H1 (cell line): ENCODE measurements at regions of chr12 and their contacts with region 1.

Region 1: DNA sequence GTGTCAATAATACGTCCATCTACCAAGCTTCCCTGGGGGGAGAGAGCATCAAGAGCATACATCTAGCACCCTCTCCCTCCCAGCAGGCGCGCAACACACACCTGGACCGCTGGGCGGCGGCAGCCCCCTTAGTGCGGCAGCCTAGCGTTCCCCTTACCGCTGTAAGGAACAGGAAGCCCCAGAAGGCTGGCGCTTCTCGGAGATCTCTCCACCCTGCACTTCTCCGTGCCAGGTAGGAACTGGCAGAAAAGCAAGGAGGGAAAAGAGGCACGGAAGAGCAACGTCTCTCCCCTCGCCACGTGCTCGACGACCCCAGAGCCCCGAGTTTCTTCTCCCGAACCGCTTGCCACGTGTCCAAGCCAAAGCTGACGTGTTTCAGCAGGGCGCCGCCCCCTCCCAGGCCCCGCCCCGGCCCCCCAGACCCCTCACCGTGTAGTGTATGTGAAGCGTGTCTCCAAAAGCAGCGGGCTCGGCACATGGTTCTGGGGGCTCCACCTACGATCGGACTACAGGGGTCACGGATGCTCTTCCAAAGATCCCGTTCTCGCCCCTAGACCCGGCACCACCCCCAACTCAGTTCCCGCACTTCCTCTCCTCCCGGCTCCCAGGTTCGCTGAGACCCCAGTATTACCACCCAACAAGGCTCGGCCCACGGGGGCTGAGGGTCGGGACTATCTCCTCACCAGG is 532 bp downstream of the FKBP11 start:
- DNase-seq: peak; percentile 29 to 79
- H3K4me3 ChIP-seq: peak overlapping the region; percentile 61 to 86 (median 70)
- H3K27ac ChIP-seq: peak overlapping the region; percentile 55
- H3K4me1 ChIP-seq: peaks cover 0 to 14% (median 4%) of the 10 kb centered on the region in 4 experiments; a peak in 4 of 7 replicates
- H3K27me3 ChIP-seq: no peaks in the 10 kb centered on the region; a peak in 1 of 7 replicates
- CTCF ChIP-seq: peak; percentile 64 to 71 (median 69)
- EP300 ChIP-seq: no peak
- POLR2A ChIP-seq: peak; percentile 27 to 44; a peak in 2 of 3 replicates
- RAD21 ChIP-seq: peak; percentile 46 to 61

Region 2: GRCh38 chr12:48903982-48904411 is 20.8 kb before region 1 on chr12:
- CTCF ChIA-PET with region 1: interaction called, 45 read pairs
- POLR2A ChIA-PET with region 1: interaction called, 21 read pairs
- DNase-seq: peak in 1 of 2 experiments; percentile 95
- H3K4me3 ChIP-seq: peak overlapping the region; percentile 13 to 59 (median 53); a peak in 7 of 8 replicates
- H3K27ac ChIP-seq: no peak overlapping the region
- H3K4me1 ChIP-seq: 0 out of 7 replicates have a peak, but pooled peaks cover 0 to 2% (median 0%) of the 10 kb centered on the region in 4 experiments
- H3K27me3 ChIP-seq: no peaks in the 10 kb centered on the region
- CTCF ChIP-seq: peak; percentile 75 to 77 (median 76)
- EP300 ChIP-seq: no peak
- POLR2A ChIP-seq: no peak
- RAD21 ChIP-seq: peak in 1 of 2 experiments; percentile 35; a peak in 2 of 4 replicates

Region 3: GRCh38 chr12:48910196-48910595 is 14.6 kb before region 1 on chr12:
- CTCF ChIA-PET with region 1: interaction called, 45 read pairs
- POLR2A ChIA-PET with region 1: interaction called, 51 read pairs
- DNase-seq: no peak
- H3K4me3 ChIP-seq: no peak overlapping the region
- H3K27ac ChIP-seq: no peak overlapping the region
- H3K4me1 ChIP-seq: no peaks in the 10 kb centered on the region
- H3K27me3 ChIP-seq: no peaks in the 10 kb centered on the region
- CTCF ChIP-seq: no peak
- EP300 ChIP-seq: no peak
- POLR2A ChIP-seq: no peak
- RAD21 ChIP-seq: no peak

Region 4: GRCh38 chr12:49010092-49010668 is 85.4 kb after region 1 on chr12:
- CTCF ChIA-PET with region 1: no interaction called
- POLR2A ChIA-PET with region 1: no interaction called
- DNase-seq: no peak
- H3K4me3 ChIP-seq: no peak overlapping the region
- H3K27ac ChIP-seq: no peak overlapping the region
- H3K4me1 ChIP-seq: no peaks in the 10 kb centered on the region
- H3K27me3 ChIP-seq: no peaks in the 10 kb centered on the region
- CTCF ChIP-seq: no peak
- EP300 ChIP-seq: no peak
- POLR2A ChIP-seq: no peak
- RAD21 ChIP-seq: no peak